Caco-2 (cell line): ENCODE measurements at regions of chr20 and their contacts with region 1.

Region 1: DNA sequence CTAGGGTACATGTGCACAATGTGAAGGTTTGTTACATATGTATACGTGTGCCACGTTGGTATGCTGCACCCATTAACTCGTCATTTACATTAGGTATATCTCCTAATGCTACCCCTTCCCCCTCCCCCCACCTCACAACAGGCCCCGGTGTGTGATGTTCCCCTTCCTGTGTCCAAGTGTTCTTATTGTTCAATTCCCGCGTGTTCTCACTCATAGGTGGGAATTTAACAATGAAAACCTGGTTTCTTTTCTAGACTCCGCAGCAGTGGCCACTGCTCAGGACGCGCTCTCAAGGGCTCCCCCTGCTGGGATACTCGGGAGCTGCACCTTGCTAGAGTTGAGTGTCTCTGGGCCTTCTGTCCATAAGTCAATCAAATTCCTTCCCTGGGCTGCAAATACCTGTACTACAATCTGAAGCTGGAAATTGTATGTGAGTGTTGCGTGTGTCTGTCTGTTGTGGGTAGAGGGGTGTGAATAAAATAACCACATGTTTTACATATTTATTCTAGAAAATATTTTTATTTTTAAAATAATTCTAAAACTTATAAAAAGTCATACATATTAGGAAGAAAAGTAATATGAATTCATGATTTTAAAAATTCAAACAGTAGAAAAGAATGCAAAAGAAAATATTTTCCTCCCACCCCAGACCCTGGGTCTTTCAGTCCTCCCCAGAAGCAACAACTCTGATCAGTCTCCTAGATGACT is 8.2 kb upstream of the CEP250 start:
- DNase-seq: peak; percentile 96 to 99
- H3K4me3 ChIP-seq: peak overlapping the region; percentile 28; the same call in 1 of the 2 replicates
- H3K4me3 Mint-ChIP-seq: peak overlapping the region; percentile 73
- H3K27ac Mint-ChIP-seq: peak overlapping the region; percentile 36
- H3K4me1 ChIP-seq: no peaks in the 10 kb centered on the region
- H3K4me1 Mint-ChIP-seq: peaks cover 11% of the 10 kb centered on the region
- H3K27me3 ChIP-seq: no peaks in the 10 kb centered on the region
- H3K27me3 Mint-ChIP-seq: no peaks in the 10 kb centered on the region
- CTCF ChIP-seq: peak; percentile 99 to 100

Region 2: DNA sequence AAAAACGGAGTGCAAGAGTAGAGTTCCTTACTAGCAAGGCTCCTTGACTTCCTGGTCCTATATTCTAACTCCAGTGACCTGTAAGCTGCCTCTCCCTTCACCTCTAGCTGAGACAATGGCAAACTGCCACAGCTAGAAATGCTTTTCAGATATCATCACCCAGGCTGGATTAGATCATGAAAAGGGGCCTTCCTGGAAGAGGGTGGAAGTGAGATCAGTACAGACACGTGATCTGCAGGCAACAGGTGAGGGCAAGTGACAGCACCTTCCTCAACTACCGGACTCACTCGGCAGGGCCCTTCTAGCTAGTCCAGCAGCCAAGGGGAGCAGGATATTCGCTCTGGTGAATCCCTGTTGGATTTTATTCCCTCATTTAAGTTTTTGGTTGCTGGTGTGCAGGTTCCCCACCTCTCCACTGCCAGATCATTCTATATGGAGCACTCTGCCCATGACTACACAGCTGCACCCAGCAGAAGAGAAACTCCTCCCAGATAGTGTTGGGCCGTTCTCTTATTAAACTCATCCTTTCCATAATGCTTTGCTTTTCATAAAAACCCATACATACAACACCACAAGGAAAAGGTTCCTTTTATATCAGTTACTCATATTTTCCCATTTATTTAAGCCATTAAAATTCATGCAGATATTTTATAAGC is 128.6 kb before region 1 on chr20:
- CTCF ChIA-PET with region 1: interaction called, 14 read pairs
- POLR2A ChIA-PET with region 1: no interaction called
- intact Hi-C with region 1: no loop called
- DNase-seq: peak in 1 of 2 experiments; percentile 72
- H3K4me3 ChIP-seq: no peak overlapping the region
- H3K4me3 Mint-ChIP-seq: no peak overlapping the region
- H3K27ac Mint-ChIP-seq: peak overlapping the region; percentile 86
- H3K4me1 ChIP-seq: peaks cover 55% of the 10 kb centered on the region
- H3K4me1 Mint-ChIP-seq: peaks cover 48% of the 10 kb centered on the region
- H3K27me3 ChIP-seq: no peaks in the 10 kb centered on the region
- H3K27me3 Mint-ChIP-seq: no peaks in the 10 kb centered on the region
- CTCF ChIP-seq: no peak

Region 3: DNA sequence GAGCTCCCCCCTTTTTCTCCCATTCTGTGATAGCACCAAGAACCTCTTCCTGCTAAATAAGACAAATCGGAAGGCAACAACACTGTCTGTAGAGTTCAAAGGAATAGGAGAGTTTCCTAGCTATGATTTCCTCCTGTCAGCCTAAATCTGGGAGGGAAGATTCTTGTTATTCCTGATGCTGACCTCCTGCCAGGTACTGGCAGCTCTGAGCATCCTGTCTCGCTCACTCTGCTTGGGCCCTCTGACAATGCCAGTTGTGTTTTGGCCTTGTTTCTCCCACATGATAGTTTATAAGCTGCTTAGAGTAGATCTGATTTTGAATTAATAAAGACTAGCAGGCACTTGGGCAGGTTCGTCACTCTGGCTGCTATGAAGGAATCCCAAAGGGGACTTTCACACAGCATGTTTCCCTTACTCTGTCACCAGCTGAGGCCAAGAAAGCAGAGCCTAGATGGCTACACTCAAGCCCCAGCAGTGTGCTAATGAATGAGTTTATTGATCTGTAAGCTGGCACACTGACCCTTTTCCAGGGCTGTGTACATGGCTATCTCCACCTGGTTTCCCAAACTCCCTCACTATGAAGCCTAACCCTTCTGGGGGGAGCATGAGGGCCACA is 87.8 kb before region 1 on chr20:
- CTCF ChIA-PET with region 1: interaction called, 11 read pairs
- POLR2A ChIA-PET with region 1: no interaction called
- intact Hi-C with region 1: no loop called
- DNase-seq: no peak
- H3K4me3 ChIP-seq: no peak overlapping the region
- H3K4me3 Mint-ChIP-seq: no peak overlapping the region
- H3K27ac Mint-ChIP-seq: no peak overlapping the region
- H3K4me1 ChIP-seq: peaks cover 4% of the 10 kb centered on the region; the same call in 1 of the 2 replicates
- H3K4me1 Mint-ChIP-seq: no peaks in the 10 kb centered on the region
- H3K27me3 ChIP-seq: no peaks in the 10 kb centered on the region
- H3K27me3 Mint-ChIP-seq: no peaks in the 10 kb centered on the region
- CTCF ChIP-seq: no peak

Region 4: DNA sequence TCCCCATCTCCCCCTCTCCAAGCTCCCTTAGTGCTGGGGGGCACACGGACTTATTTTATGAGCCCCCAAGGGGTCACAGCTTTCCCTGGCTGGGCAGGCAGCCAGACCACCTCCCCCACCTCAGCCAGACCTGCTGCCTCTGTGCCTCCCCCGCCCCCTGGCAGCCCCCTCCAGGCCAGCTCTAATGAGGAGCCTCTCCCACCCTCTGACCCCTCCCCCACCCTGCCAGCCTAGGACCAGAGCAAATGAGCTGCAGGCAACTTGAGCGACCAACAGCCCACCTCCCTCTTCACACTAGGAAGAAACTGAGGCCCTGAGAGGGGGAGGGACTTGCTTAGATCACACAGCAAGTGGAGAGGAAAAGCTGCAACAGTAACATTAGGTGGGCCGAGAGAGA is 11.1 kb before region 1 on chr20:
- CTCF ChIA-PET with region 1: interaction called, 13 read pairs
- POLR2A ChIA-PET with region 1: interaction called, 7 read pairs
- intact Hi-C with region 1: no loop called
- DNase-seq: no peak
- H3K4me3 ChIP-seq: no peak overlapping the region
- H3K4me3 Mint-ChIP-seq: no peak overlapping the region
- H3K27ac Mint-ChIP-seq: no peak overlapping the region
- H3K4me1 ChIP-seq: peaks cover 4% of the 10 kb centered on the region; the same call in 1 of the 2 replicates
- H3K4me1 Mint-ChIP-seq: no peaks in the 10 kb centered on the region
- H3K27me3 ChIP-seq: no peaks in the 10 kb centered on the region
- H3K27me3 Mint-ChIP-seq: no peaks in the 10 kb centered on the region
- CTCF ChIP-seq: no peak

Region 5: GRCh38 chr20:35463455-35464300 is 16.4 kb after region 1 on chr20:
- CTCF ChIA-PET with region 1: interaction called, 12 read pairs
- POLR2A ChIA-PET with region 1: no interaction called
- intact Hi-C with region 1: no loop called
- DNase-seq: peak; percentile 83 to 88
- H3K4me3 ChIP-seq: no peak overlapping the region
- H3K4me3 Mint-ChIP-seq: no peak overlapping the region
- H3K27ac Mint-ChIP-seq: no peak overlapping the region
- H3K4me1 ChIP-seq: peaks cover 13% of the 10 kb centered on the region
- H3K4me1 Mint-ChIP-seq: peaks cover 18% of the 10 kb centered on the region
- H3K27me3 ChIP-seq: no peaks in the 10 kb centered on the region
- H3K27me3 Mint-ChIP-seq: no peaks in the 10 kb centered on the region
- CTCF ChIP-seq: peak; percentile 96 to 97

Region 6: GRCh38 chr20:35518954-35519353 is 71.7 kb after region 1 on chr20:
- CTCF ChIA-PET with region 1: no interaction called
- POLR2A ChIA-PET with region 1: no interaction called
- intact Hi-C with region 1: no loop called
- DNase-seq: no peak
- H3K4me3 ChIP-seq: no peak overlapping the region
- H3K4me3 Mint-ChIP-seq: no peak overlapping the region
- H3K27ac Mint-ChIP-seq: no peak overlapping the region
- H3K4me1 ChIP-seq: no peaks in the 10 kb centered on the region
- H3K4me1 Mint-ChIP-seq: no peaks in the 10 kb centered on the region
- H3K27me3 ChIP-seq: no peaks in the 10 kb centered on the region
- H3K27me3 Mint-ChIP-seq: no peaks in the 10 kb centered on the region
- CTCF ChIP-seq: no peak